Naive thymus-derived CD4-positive, alpha-beta T cell (primary cell): ENCODE measurements at regions of chr10 and their contacts with region 1.

Region 1: DNA sequence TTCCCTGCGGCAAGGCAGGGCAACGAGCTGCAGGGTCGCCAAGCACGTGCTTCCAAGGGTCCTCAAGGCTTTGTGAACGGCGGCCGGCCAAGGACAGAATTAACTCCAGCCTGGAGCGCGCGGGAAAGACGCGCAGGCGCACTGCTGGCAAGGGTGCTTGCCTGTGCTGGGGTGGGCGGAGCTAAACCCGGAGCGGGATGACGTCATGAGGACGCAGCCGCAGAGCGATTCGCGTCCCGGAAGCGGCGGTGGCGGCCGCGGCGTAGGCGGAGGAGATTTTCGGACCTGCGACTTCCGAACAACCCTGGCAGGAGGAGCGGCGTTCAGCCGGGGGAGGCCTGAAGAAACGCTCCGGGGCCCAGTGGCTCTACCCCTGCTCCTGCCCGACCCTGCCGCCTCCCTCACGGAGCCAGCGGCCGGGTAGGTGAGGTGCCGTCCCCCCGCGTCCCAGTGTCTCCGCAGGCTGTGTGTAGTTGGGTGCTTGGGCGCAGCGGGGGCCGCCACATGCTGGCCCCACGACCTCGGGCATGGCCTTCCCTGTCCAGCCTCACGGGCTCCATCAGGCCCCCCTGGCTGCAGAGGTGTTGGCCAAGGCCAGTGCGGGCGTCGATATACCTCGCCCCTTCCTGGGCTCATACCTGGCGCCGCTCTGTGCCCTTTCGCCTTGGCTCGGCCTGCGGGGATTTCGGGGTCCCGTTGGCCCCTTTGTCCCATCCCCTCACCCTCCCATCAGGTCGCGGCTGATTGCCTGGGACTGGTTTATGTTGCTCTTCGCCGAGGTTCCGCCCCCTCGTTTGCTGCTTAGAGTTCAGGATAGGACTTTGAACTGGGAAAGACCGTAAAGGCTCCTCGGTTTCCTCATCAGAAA is at the start of gene ZFYVE27:
- DNase-seq: peak; percentile 88 to 99 (median 94)
- ATAC-seq: peak; percentile 96
- H3K4me3 ChIP-seq: peak within 1 kb of the TSS; percentile 86
- H3K4me3 Mint-ChIP-seq: peak within 1 kb of the TSS; percentile 88 to 98 (median 94)
- H3K27ac ChIP-seq: peak within 1 kb of the TSS; percentile 99
- H3K27ac Mint-ChIP-seq: peak within 1 kb of the TSS; percentile 95 to 99 (median 97)
- H3K4me1 ChIP-seq: peaks cover 18% of the 10 kb centered on the region in 2 donors
- H3K4me1 Mint-ChIP-seq: peaks cover 20 to 62% (median 58%) of the 10 kb centered on the region in 7 donors
- H3K27me3 ChIP-seq: no peaks in the 10 kb centered on the region
- H3K27me3 Mint-ChIP-seq: peaks cover 0 to 3% (median 0%) of the 10 kb centered on the region in 5 donors
- total RNA-seq, gene ZFYVE27: 31.0 to 68.8 (median 61.8) TPM

Region 2: DNA sequence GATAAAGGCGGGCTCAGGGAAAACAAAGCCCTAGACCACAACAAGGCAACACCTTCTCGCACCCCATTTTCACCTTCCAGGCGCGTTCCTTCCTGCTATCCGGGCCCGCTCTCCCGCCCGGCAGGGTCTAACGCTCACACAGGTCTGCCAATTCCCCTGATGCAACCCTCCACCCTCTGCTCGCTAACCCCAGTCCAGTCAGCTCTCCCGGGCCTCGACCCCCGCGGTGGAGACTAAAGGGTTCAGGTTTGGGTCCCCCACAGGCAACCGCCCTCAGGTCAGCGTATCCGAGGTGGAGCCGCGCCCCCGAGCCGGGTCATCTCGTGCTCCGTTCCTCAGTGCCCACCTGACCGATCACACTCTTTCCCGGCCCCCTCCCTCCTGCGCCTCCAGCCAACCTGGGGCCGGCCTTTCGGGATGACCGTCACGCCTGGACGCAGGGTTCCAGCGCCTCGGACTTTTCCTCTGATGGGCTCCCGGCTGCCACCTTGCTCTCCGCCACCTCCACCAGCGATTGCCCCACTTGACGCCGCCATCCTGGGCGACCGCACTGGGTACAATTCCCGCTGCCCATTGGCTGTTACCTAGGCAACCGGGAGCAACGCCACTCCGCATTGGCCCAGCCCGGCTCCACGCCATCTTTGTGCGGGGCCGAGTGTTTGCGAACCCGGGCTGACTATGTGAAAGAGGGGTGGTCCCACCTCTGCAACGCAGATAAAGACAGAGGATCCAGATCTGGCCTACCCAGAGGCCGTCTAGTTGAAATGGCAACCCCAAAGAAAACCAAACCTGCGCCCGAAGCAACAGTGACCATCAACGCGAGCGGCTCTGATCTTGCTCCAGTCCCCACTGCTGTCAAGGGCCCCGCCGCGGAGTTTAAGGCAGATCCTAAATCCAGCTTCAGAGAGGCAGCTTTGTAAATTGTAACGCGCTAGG is 103.9 kb before region 1 on chr10 and contains the start of gene MORN4:
- CTCF ChIA-PET with region 1: no interaction called
- POLR2A ChIA-PET with region 1: interaction called, 3 read pairs
- intact Hi-C with region 1: loop called in 1 of 2 experiments (anchors 2 kb)
- DNase-seq: peak; percentile 82 to 94 (median 92)
- ATAC-seq: peak; percentile 100
- H3K4me3 ChIP-seq: peak within 1 kb of the TSS; percentile 91
- H3K4me3 Mint-ChIP-seq: peak within 1 kb of the TSS; percentile 92 to 100 (median 98)
- H3K27ac ChIP-seq: peak within 1 kb of the TSS; percentile 50
- H3K27ac Mint-ChIP-seq: peak within 1 kb of the TSS; percentile 82 to 96 (median 92)
- H3K4me1 ChIP-seq: peaks cover 0 to 10% of the 10 kb centered on the region in 2 donors
- H3K4me1 Mint-ChIP-seq: peaks cover 10 to 18% (median 16%) of the 10 kb centered on the region in 7 donors
- H3K27me3 ChIP-seq: no peaks in the 10 kb centered on the region
- H3K27me3 Mint-ChIP-seq: no peaks in the 10 kb centered on the region
- total RNA-seq, gene MORN4: 0.78 to 4.1 (median 1.5) TPM

Region 3: DNA sequence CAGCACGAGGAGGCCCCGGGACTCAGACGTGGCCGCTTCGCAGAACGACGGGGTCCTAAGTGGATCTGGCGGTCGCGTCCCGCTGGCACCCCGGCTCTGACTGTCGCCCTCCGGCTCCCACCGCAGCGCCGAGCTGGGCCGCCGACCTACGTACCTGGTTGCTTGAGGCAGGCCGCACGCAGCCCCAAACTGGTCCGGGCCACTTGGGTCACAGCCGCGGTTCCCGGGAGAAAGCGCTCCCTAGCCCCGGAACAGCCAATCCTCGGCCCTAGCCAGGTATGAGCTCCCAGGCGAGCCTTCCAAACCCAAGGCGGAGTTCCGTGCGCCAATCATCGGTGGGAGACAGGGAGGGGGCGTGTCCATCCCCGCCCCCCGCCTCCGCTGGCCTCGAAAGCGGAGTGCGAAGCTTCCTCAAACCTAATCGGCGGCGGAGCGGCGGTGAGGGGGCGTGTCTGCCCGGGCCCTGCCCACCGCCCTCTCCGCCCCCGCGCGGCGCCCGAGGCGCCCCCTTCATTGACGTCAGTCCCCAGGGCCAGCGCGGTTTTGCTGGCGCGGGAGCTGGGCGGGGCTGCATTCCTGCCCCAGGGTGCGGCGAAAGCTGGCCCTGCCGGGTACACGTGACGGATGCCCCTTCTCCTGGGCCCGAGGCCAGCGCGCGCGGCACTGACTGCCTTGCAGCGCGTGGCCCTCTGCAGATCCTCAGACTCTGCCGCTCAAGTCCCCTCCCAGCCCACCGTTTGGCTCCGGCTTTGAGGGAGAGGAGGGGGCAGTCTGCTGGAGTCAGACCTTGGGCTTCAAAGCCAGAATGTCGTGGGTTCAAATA is 50.0 kb before region 1 on chr10 and contains the start of gene AVPI1:
- CTCF ChIA-PET with region 1: interaction called, 19 read pairs
- POLR2A ChIA-PET with region 1: interaction called, 44 read pairs
- intact Hi-C with region 1: loop called (anchors 1 kb)
- DNase-seq: peak; percentile 94 to 97 (median 96)
- ATAC-seq: peak; percentile 97
- H3K4me3 ChIP-seq: peak within 1 kb of the TSS; percentile 80
- H3K4me3 Mint-ChIP-seq: peak within 1 kb of the TSS; percentile 85 to 90 (median 88)
- H3K27ac ChIP-seq: peak within 1 kb of the TSS; percentile 81
- H3K27ac Mint-ChIP-seq: peak within 1 kb of the TSS; percentile 28 to 96 (median 91)
- H3K4me1 ChIP-seq: peaks cover 5 to 25% of the 10 kb centered on the region in 2 donors
- H3K4me1 Mint-ChIP-seq: peaks cover 9 to 30% (median 19%) of the 10 kb centered on the region in 7 donors
- H3K27me3 ChIP-seq: no peaks in the 10 kb centered on the region
- H3K27me3 Mint-ChIP-seq: peaks cover 0 to 2% (median 0%) of the 10 kb centered on the region in 5 donors
- total RNA-seq, gene AVPI1: 0.65 to 10.6 (median 2.5) TPM

Region 4: DNA sequence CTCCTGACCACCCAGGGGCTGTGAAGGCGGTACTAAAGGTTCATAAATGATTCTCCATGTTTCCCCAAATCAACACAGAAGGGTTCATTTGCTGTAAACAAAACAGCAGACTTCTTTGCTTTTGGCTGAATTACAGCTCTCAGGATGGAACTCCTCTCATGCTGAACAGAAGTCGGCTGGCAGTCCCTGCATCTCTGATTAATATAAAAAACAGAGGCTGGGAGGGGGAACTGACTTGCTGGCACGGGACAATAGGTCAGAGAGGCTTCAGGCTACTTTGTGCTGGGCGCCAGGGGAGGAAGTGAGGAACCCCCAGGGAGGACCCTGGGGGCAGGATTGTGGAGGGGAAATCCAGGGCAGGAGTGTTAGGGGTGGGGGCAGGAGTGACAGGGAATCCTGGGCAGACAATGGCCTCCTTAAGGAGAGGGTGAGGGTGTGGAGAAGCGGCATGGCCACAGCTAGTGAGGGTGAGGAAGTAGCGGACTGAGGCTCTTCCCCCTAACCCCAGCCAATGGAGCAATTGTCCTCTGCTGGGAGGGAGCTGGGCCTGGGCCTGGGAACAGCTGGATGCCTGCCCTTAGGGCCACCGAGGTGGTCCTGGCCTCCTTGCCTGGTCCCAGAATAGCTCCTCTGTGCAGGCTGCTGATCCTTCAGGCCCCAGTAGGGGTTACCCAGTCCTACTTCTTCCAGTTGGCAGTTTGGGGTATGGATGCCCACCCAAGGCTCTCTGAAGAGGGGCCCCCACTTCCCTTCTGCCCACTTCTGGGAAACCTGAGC is 43.9 kb after region 1 on chr10:
- CTCF ChIA-PET with region 1: interaction called, 3 read pairs
- POLR2A ChIA-PET with region 1: interaction called, 16 read pairs
- intact Hi-C with region 1: no loop called
- DNase-seq: no peak
- ATAC-seq: peak; percentile 4
- H3K4me3 ChIP-seq: peak overlapping the region; percentile 37
- H3K4me3 Mint-ChIP-seq: peak overlapping the region in 9 of 10 donors; percentile 25 to 84 (median 74)
- H3K27ac ChIP-seq: peak overlapping the region; percentile 63
- H3K27ac Mint-ChIP-seq: peak overlapping the region in 8 of 9 donors; percentile 79 to 99 (median 90)
- H3K4me1 ChIP-seq: peaks cover 9 to 32% of the 10 kb centered on the region in 2 donors
- H3K4me1 Mint-ChIP-seq: peaks cover 8 to 39% (median 38%) of the 10 kb centered on the region in 7 donors
- H3K27me3 ChIP-seq: no peaks in the 10 kb centered on the region
- H3K27me3 Mint-ChIP-seq: no peaks in the 10 kb centered on the region

Region 5: GRCh38 chr10:97849687-97850402 is 112.7 kb after region 1 on chr10 and contains the start of gene GOLGA7B:
- CTCF ChIA-PET with region 1: no interaction called
- POLR2A ChIA-PET with region 1: interaction called, 3 read pairs
- intact Hi-C with region 1: loop called in 1 of 2 experiments (anchors 1 kb)
- DNase-seq: peak; percentile 43 to 70 (median 66)
- ATAC-seq: peak; percentile 87
- H3K4me3 ChIP-seq: peak within 1 kb of the TSS; percentile 74
- H3K4me3 Mint-ChIP-seq: peak within 1 kb of the TSS; percentile 84 to 94 (median 90)
- H3K27ac ChIP-seq: peak within 1 kb of the TSS; percentile 61
- H3K27ac Mint-ChIP-seq: peak within 1 kb of the TSS; percentile 70 to 93 (median 87)
- H3K4me1 ChIP-seq: peaks cover 25 to 32% of the 10 kb centered on the region in 2 donors
- H3K4me1 Mint-ChIP-seq: peaks cover 21 to 49% (median 37%) of the 10 kb centered on the region in 7 donors
- H3K27me3 ChIP-seq: no peaks in the 10 kb centered on the region
- H3K27me3 Mint-ChIP-seq: peaks cover 0 to 4% (median 0%) of the 10 kb centered on the region in 5 donors
- total RNA-seq, gene GOLGA7B: 5.8 to 8.5 (median 6.5) TPM

Region 6: GRCh38 chr10:97904018-97904381 is 166.9 kb after region 1 on chr10:
- CTCF ChIA-PET with region 1: no interaction called
- POLR2A ChIA-PET with region 1: no interaction called
- intact Hi-C with region 1: no loop called
- DNase-seq: no peak
- ATAC-seq: no peak
- H3K4me3 ChIP-seq: no peak overlapping the region
- H3K4me3 Mint-ChIP-seq: no peak overlapping the region
- H3K27ac ChIP-seq: no peak overlapping the region
- H3K27ac Mint-ChIP-seq: no peak overlapping the region
- H3K4me1 ChIP-seq: no peaks in the 10 kb centered on the region
- H3K4me1 Mint-ChIP-seq: no peaks in the 10 kb centered on the region
- H3K27me3 ChIP-seq: no peaks in the 10 kb centered on the region
- H3K27me3 Mint-ChIP-seq: peaks cover 9 to 30% (median 15%) of the 10 kb centered on the region in 5 donors

Region 7: DNA sequence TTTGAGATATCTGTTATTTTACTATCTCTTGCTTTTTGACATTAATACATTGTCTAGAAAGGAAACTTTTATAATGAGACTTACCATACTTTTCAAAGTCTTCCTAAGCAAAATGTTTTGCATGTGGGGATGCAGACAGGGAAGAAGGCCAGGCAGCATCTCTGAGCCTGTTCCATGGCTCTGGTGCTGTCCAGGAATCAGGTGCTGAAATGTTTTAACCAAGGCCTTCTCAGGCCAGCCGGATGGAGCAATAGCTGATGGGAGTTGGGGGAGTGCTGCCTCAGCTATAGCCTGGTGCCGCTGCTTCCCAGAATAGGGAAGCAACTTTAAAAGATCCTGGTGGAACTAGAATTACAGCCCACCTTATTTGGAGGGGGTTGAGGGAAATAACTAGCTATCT is 254.7 kb after region 1 on chr10:
- CTCF ChIA-PET with region 1: no interaction called
- POLR2A ChIA-PET with region 1: no interaction called
- intact Hi-C with region 1: no loop called
- DNase-seq: no peak
- ATAC-seq: no peak
- H3K4me3 ChIP-seq: no peak overlapping the region
- H3K4me3 Mint-ChIP-seq: no peak overlapping the region
- H3K27ac ChIP-seq: no peak overlapping the region
- H3K27ac Mint-ChIP-seq: no peak overlapping the region
- H3K4me1 ChIP-seq: no peaks in the 10 kb centered on the region
- H3K4me1 Mint-ChIP-seq: no peaks in the 10 kb centered on the region
- H3K27me3 ChIP-seq: no peaks in the 10 kb centered on the region
- H3K27me3 Mint-ChIP-seq: peaks cover 0 to 49% (median 42%) of the 10 kb centered on the region in 5 donors

Region 8: GRCh38 chr10:99732033-99732912 is 1995.1 kb after region 1 on chr10 and contains the starts of genes COX15 and CUTC:
- CTCF ChIA-PET with region 1: no interaction called
- POLR2A ChIA-PET with region 1: no interaction called
- intact Hi-C with region 1: loop called in 1 of 2 experiments (anchors 5 kb)
- DNase-seq: peak; percentile 89 to 95 (median 94)
- ATAC-seq: peak; percentile 95
- H3K4me3 ChIP-seq: peak within 1 kb of the TSS; percentile 94
- H3K4me3 Mint-ChIP-seq: peak within 1 kb of the TSS; percentile 95 to 100 (median 98)
- H3K27ac ChIP-seq: peak within 1 kb of the TSS; percentile 83
- H3K27ac Mint-ChIP-seq: peak within 1 kb of the TSS; percentile 98 to 100 (median 99)
- H3K4me1 ChIP-seq: peaks cover 11 to 19% of the 10 kb centered on the region in 2 donors
- H3K4me1 Mint-ChIP-seq: peaks cover 28 to 79% (median 52%) of the 10 kb centered on the region in 7 donors
- H3K27me3 ChIP-seq: no peaks in the 10 kb centered on the region
- H3K27me3 Mint-ChIP-seq: no peaks in the 10 kb centered on the region
- total RNA-seq, gene COX15: 17.6 to 43.5 (median 32.9) TPM
- total RNA-seq, gene CUTC: 19.3 to 37.1 (median 25.0) TPM